ENCODE measurements at regions of chr12 and their contacts with region 1.

Region 1: DNA sequence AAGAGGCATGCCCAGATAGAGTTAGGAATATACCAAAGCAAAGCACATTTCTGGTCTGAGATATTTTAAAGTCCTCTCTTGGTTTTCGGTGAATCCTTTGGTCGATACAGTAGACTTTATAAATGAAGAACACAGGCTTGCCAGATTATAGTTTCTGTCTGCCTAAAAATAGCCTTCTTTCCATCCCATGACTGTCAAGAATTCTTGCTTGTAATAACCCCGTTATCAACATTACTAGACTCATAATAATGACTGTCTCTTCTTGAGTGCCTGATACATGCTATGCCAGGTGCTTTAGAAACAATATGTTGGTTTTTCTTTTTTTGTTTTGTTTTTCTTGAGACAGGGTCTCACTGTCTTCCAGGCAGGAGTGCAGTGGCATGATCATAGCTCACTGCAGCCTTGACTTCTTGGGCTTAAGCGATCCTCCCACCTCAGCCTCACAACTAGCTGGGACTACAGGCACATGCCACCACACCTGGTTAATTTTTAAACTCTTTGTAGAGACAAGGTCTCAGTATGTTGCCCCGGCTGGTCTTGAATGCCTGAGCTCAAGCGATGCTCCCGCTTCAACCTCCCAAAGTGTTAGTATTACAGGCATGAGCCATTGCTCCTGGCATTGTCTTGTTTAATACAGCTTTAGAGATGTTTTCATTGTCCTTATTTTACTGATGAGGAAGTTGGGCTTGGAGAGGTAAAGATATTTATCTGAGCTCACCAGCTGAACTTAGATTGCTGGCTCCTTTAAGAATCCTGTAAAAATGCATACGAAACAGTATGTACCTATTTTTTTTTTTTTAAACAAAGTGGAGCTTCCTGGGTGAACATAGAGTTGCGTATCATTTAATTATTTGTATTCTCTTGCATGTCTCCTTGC is 30.4 kb downstream of the CHST11 start:
- DNase-seq: no peak
- H3K4me3 ChIP-seq: no peak overlapping the region
- H3K27ac ChIP-seq: peak overlapping the region; percentile 40; the same call in 1 of the 2 replicates
- H3K4me1 ChIP-seq: no peaks in the 10 kb centered on the region
- H3K27me3 ChIP-seq: no peaks in the 10 kb centered on the region
- CTCF ChIP-seq: no peak

Region 2: DNA sequence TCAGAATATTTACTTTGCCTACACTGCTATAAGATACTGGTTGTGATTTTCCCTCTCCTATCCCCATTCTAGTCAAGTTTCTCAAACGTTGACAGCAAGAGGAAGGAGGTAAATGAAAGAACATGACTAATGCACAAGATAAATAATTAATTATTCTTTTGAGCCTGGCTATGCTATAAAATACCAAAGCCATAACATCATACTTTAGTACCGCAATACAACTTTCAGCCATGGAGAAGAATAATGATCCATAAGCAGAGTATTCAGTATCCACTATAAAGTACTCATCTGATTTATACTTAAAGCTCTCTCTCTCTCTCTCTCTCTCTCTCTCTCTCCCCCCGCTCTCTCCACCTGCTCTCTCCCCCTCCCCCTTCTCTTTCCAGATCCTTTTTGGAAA is 480.3 kb before region 1 on chr12:
- CTCF ChIA-PET with region 1: no interaction called
- POLR2A ChIA-PET with region 1: no interaction called
- intact Hi-C with region 1: no loop called
- DNase-seq: peak in 1 of 2 experiments; percentile 61
- H3K4me3 ChIP-seq: no peak overlapping the region
- H3K27ac ChIP-seq: no peak overlapping the region
- H3K4me1 ChIP-seq: peaks cover 5% of the 10 kb centered on the region
- H3K27me3 ChIP-seq: peaks cover 12% of the 10 kb centered on the region; the same call in 1 of the 2 replicates
- CTCF ChIP-seq: no peak

Region 3: GRCh38 chr12:104337030-104337558 is 150.1 kb before region 1 on chr12:
- CTCF ChIA-PET with region 1: no interaction called
- POLR2A ChIA-PET with region 1: interaction called, 11 read pairs
- intact Hi-C with region 1: no loop called
- DNase-seq: no peak
- H3K4me3 ChIP-seq: no peak overlapping the region
- H3K27ac ChIP-seq: peak overlapping the region; percentile 49; the same call in 1 of the 2 replicates
- H3K4me1 ChIP-seq: peaks cover 71% of the 10 kb centered on the region
- H3K27me3 ChIP-seq: no peaks in the 10 kb centered on the region
- CTCF ChIP-seq: no peak

Measured in PC-9 (cell line).